AG04449 (cell line): ENCODE measurements at regions of chr2 and their contacts with region 1.

Region 1: GRCh38 chr2:174039551-174040416 is 74.6 kb upstream of the SP3 start:
- DNase-seq: peak; percentile 78
- H3K4me3 ChIP-seq: no peak overlapping the region
- CTCF ChIP-seq: peak; percentile 87

Region 2: DNA sequence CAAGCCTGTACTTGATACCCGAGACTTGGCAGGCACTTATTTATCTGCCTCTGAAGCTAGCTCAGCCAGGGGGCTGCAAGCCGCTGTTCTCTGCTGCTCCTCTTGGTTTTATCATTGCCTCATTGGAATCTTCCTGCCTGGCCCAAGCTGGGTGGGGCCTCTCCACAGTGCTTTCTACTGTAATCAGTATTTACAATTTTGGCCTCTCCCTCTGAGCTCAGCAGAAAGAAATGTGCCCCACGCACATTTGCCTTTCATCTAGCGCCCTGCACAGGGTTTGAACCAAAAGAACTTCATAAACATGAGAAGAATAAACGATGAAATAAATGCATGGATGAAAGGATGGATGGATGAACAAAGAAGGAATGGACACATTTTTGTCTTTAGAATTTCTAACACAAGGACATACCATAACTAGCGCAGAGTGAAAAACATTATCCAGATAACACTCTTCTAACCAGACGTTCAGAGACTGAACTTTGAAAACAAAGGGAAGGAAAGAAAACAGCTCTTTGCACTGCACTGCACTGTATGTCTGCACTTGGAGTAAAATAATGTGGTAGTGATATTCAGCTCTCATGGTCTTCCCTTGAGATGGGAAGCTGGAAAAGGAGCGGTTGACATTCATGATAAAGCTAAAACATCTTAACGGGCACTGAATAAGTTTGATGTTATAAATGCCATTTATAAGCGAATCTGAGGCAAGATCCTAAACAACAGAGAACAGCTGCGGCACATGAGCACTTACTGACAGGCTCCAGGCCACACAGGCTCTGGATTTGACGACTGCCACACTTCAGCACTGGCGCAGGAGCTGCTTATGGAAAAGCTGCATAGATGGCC is 12.2 kb after region 1 on chr2:
- CTCF ChIA-PET with region 1: interaction called, 22 read pairs
- POLR2A ChIA-PET with region 1: no interaction called
- DNase-seq: no peak
- H3K4me3 ChIP-seq: no peak overlapping the region
- CTCF ChIP-seq: no peak

Region 3: DNA sequence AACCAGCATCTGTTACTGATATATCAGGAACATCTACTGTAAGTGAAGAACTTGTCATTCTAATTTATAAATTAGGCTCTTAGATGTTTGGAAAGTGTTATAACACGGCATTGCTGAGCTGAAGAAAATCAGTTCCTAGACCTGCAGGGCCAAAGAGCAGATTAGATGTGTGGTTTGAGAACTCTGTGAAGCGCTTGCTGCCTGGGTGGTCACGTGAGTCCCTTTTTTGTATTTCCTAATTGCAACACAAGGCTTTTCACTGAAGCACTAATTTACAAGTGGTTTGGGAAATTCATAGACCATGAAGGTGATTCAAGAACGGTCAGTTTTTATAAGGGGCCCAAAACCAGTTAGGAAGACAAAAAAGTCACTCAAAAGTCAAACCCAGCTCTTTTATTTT is 32.3 kb after region 1 on chr2:
- CTCF ChIA-PET with region 1: no interaction called
- POLR2A ChIA-PET with region 1: no interaction called
- DNase-seq: no peak
- H3K4me3 ChIP-seq: no peak overlapping the region
- CTCF ChIP-seq: no peak